ENCODE measurements at regions of chr7 and their contacts with region 1.

Region 1: GRCh38 chr7:127730658-127731276 is 78.8 kb downstream of the SND1 start:
- DNase-seq: no peak
- ATAC-seq: no peak
- H3K4me3 ChIP-seq: no peak overlapping the region
- H3K27ac ChIP-seq: no peak overlapping the region
- H3K4me1 ChIP-seq: no peaks in the 10 kb centered on the region
- H3K27me3 ChIP-seq: no peaks in the 10 kb centered on the region
- CTCF ChIP-seq: no peak
- EP300 ChIP-seq: no peak
- POLR2A ChIP-seq: no peak
- RAD21 ChIP-seq: no peak

Region 2: DNA sequence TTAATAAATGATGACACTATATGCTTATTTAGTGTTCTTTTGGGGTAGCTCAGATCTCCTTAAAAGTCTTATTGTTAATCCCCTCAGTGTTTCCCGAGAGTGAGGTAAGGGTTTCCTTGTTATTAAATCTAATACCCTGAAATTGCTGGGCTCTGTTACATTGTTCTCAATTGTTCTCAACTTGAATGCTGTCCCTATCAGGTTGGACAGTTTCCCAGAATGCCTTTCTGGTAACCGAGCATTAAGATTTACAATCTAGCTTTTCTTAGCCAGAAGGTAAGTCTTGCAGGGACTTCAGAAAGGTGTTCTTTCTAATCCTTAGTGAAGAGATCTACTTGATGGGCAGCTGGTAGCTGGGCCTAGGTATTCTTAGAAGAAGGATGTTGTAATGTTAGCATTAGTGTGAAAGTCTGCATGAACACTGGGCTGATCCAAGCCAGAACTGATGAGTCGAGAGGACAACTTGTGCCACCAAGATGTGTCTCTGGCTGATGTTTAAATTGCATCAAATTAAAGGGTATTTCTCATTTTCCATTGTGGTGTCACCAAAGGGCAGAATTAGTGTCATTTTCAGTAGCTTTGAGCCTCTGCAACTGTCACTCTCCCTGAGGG is 11.1 kb after region 1 on chr7:
- CTCF ChIA-PET with region 1: no interaction called
- POLR2A ChIA-PET with region 1: no interaction called
- RAD21 ChIA-PET with region 1: no interaction called
- SMC1A ChIA-PET with region 1: interaction called, 11 read pairs
- in situ Hi-C with region 1: no loop called
- intact Hi-C with region 1: no loop called
- DNase-seq: no peak
- ATAC-seq: no peak
- H3K4me3 ChIP-seq: no peak overlapping the region
- H3K27ac ChIP-seq: no peak overlapping the region
- H3K4me1 ChIP-seq: no peaks in the 10 kb centered on the region; the same call in 1 of the 2 replicates
- H3K27me3 ChIP-seq: no peaks in the 10 kb centered on the region
- CTCF ChIP-seq: no peak
- EP300 ChIP-seq: no peak
- POLR2A ChIP-seq: no peak
- RAD21 ChIP-seq: no peak

Region 3: GRCh38 chr7:127766831-127767459 is 36.2 kb after region 1 on chr7:
- CTCF ChIA-PET with region 1: no interaction called
- POLR2A ChIA-PET with region 1: no interaction called
- RAD21 ChIA-PET with region 1: no interaction called
- SMC1A ChIA-PET with region 1: no interaction called
- in situ Hi-C with region 1: no loop called
- intact Hi-C with region 1: no loop called
- DNase-seq: no peak
- ATAC-seq: no peak
- H3K4me3 ChIP-seq: no peak overlapping the region
- H3K27ac ChIP-seq: no peak overlapping the region
- H3K4me1 ChIP-seq: peaks cover 4% of the 10 kb centered on the region; the same call in 1 of the 2 replicates
- H3K27me3 ChIP-seq: no peaks in the 10 kb centered on the region
- CTCF ChIP-seq: no peak
- EP300 ChIP-seq: no peak
- POLR2A ChIP-seq: no peak
- RAD21 ChIP-seq: no peak